PC-9 (cell line): ENCODE measurements at regions of chr1 and their contacts with region 1.

Region 1: GRCh38 chr1:11671544-11672286 is 7.7 kb downstream of the FBXO6 start:
- DNase-seq: no peak
- H3K4me3 ChIP-seq: no peak overlapping the region
- H3K27ac ChIP-seq: no peak overlapping the region
- H3K4me1 ChIP-seq: no peaks in the 10 kb centered on the region
- H3K27me3 ChIP-seq: no peaks in the 10 kb centered on the region
- CTCF ChIP-seq: no peak

Region 2: DNA sequence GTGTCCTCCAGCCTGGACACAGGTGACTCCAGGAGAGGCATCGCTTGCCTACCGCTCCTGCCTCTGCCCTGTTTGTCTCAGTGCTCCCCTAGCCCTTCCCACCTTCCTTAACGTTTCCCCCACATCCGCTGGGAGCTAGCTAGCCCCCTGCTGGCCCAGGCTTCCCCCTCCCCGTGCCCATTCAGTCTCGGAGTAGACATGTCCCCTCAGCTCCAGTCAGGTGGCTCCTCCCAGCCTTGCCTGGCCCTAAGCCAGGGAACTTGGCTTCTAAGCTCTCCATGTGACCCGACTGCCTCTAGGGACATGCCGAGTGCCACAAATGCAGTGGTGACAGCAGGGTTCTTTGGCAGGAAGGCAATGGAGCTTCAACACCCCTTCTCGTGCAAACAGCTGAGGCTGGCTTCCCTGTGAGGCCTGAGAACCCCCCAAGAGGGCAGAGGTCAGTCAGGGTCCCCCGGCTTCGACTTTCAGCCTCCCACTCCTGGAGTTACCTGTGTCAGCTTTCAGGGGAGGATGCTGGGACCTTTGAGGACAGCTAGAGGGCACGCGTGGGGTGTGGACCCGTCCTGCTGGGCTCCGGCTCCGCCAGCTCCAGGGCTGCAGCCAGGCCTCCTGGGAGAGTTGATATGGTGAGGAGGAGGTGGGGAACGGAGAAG is 36.0 kb after region 1 on chr1:
- CTCF ChIA-PET with region 1: no interaction called
- POLR2A ChIA-PET with region 1: no interaction called
- intact Hi-C with region 1: loop called (anchors 5 kb)
- DNase-seq: peak in 1 of 2 experiments; percentile 66
- H3K4me3 ChIP-seq: no peak overlapping the region
- H3K27ac ChIP-seq: no peak overlapping the region
- H3K4me1 ChIP-seq: no peaks in the 10 kb centered on the region; the same call in 1 of the 2 replicates
- H3K27me3 ChIP-seq: peaks cover 25% of the 10 kb centered on the region
- CTCF ChIP-seq: no peak